ENCODE measurements at regions of chr12 and their contacts with region 1.

Region 1: GRCh38 chr12:79690638-79691493 is at the start of gene PAWR:
- DNase-seq: peak; percentile 83
- ATAC-seq: peak; percentile 73
- H3K4me3 ChIP-seq: peak within 1 kb of the TSS; percentile 23 to 86 (median 70)
- H3K4me3 Mint-ChIP-seq: peak within 1 kb of the TSS; percentile 93
- H3K27ac ChIP-seq: peak within 1 kb of the TSS; percentile 67 to 98
- H3K27ac Mint-ChIP-seq: peak within 1 kb of the TSS; percentile 93
- H3K4me1 ChIP-seq: peaks cover 23 to 27% of the 10 kb centered on the region in 2 donors
- H3K4me1 Mint-ChIP-seq: peaks cover 34% of the 10 kb centered on the region
- H3K27me3 ChIP-seq: no peaks in the 10 kb centered on the region
- H3K27me3 Mint-ChIP-seq: no peaks in the 10 kb centered on the region
- CTCF ChIP-seq: no peak
- total RNA-seq, gene PAWR: 90.1 and 110 TPM in 2 replicates

Region 2: DNA sequence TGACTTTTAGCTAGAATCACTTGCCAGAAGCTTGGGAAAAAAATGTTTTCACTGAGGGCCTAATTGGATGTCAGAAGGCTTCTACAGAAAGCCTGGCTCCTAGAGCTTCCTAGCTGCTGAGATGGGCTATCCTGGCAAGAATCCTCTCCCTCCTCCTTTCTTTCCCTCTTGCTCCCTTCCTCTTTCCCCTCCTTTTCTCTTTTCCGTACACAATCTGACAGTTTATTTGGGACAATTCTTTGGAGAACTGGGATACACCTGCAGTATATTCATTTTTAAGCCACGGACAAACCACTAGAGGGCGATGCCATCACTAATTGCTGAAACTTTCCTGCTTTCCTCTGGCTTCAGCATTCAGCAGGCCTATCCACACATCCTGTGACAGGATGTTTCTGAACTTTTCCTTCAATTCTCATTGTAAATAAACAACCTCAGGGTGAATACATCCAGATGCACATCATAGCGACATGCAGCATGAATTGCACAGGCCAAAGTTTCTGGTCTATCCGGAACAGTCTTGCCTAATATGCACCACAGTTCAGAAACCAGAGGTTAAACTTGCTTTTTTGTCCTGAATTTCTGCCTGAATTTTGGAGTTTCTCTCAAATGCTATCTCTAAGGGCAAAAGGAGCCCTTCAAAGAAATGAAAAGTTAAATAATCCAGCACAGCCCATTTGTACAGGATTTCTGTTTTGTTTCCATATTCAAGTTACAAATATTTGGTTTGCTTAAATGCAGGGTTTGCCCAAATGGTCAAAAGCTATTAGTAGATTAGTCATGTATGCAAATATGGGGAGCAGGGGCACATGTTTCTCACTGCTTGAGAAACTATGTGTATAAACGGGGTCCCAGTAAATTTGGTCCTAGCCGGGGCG is 142.9 kb before region 1 on chr12:
- CTCF ChIA-PET with region 1: interaction called, 6 read pairs
- POLR2A ChIA-PET with region 1: no interaction called
- intact Hi-C with region 1: loop called (anchors 1 kb)
- DNase-seq: peak; percentile 50
- ATAC-seq: peak; percentile 43
- H3K4me3 ChIP-seq: no peak overlapping the region
- H3K4me3 Mint-ChIP-seq: no peak overlapping the region
- H3K27ac ChIP-seq: no peak overlapping the region
- H3K27ac Mint-ChIP-seq: no peak overlapping the region
- H3K4me1 ChIP-seq: no peaks in the 10 kb centered on the region
- H3K4me1 Mint-ChIP-seq: no peaks in the 10 kb centered on the region
- H3K27me3 ChIP-seq: no peaks in the 10 kb centered on the region
- H3K27me3 Mint-ChIP-seq: no peaks in the 10 kb centered on the region
- CTCF ChIP-seq: peak; percentile 72

Region 3: DNA sequence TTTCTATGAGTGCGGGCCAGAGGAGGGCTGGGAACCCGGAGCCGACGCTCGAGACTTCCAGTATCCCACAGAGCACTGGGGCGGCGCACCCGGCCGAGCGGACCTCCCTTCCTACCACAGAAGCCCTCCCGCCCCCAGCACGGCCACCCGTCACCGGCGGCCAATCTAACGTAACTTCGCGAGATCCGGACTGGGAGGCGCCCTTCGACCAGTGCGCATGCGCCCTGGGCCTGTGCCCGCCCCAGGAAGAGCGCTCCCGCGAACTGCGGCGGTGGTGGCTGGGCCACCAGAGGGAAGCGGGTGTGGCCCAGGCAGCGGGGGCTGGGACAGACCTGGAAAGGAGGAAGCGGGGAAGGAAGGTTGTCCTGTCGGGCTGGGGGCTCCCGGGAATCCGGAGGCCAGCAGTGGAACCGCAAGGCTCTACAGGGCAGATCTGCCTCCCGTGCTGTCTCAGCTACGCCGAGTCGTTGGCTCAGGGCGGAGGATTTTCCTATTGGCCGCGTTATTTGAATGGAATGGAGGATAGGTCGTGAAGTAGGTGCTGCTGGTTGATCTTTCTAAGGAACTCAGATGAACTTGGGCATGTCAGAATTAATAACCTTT is 244.3 kb after region 1 on chr12 and contains the start of gene PPP1R12A:
- CTCF ChIA-PET with region 1: no interaction called
- POLR2A ChIA-PET with region 1: no interaction called
- intact Hi-C with region 1: loop called (anchors 1 kb)
- DNase-seq: peak; percentile 97
- ATAC-seq: peak; percentile 88
- H3K4me3 ChIP-seq: peak within 1 kb of the TSS; percentile 85 to 95 (median 92)
- H3K4me3 Mint-ChIP-seq: peak within 1 kb of the TSS; percentile 99
- H3K27ac ChIP-seq: peak within 1 kb of the TSS; percentile 92 to 93
- H3K27ac Mint-ChIP-seq: peak within 1 kb of the TSS; percentile 99
- H3K4me1 ChIP-seq: peaks cover 18 to 31% of the 10 kb centered on the region in 2 donors
- H3K4me1 Mint-ChIP-seq: peaks cover 43% of the 10 kb centered on the region
- H3K27me3 ChIP-seq: no peaks in the 10 kb centered on the region
- H3K27me3 Mint-ChIP-seq: no peaks in the 10 kb centered on the region
- CTCF ChIP-seq: no peak
- total RNA-seq, gene PPP1R12A: 110 and 139 TPM in 2 replicates